ENCODE measurements at regions of chr1 and their contacts with region 1.

Region 1: DNA sequence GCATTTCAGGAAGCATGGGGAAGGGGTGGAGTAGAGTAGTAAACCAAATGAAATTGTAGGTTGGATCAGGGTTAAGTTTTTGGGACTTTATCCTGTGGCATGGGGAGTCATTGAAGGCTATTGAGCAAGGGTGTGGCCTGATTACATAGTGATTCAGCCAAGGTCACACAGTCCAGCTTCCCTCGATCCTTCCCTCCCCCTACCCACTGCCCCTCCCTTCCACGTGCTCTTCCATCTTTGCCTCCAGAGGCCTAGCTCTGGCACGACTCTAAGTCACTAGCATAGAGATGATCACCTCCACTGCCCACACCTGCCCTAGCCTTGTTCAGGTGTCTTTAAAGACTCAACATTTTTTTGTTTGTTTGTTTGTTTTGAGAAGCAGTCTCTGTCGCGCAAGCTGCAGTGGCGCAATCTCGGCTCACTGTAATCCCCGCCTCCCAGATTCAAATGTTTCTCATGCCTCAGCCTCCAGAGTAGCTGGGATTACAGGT is 37.2 kb upstream of the SLC9A1 start:
- DNase-seq: no peak
- ATAC-seq: peak in 1 of 2 donors; percentile 41

Region 2: DNA sequence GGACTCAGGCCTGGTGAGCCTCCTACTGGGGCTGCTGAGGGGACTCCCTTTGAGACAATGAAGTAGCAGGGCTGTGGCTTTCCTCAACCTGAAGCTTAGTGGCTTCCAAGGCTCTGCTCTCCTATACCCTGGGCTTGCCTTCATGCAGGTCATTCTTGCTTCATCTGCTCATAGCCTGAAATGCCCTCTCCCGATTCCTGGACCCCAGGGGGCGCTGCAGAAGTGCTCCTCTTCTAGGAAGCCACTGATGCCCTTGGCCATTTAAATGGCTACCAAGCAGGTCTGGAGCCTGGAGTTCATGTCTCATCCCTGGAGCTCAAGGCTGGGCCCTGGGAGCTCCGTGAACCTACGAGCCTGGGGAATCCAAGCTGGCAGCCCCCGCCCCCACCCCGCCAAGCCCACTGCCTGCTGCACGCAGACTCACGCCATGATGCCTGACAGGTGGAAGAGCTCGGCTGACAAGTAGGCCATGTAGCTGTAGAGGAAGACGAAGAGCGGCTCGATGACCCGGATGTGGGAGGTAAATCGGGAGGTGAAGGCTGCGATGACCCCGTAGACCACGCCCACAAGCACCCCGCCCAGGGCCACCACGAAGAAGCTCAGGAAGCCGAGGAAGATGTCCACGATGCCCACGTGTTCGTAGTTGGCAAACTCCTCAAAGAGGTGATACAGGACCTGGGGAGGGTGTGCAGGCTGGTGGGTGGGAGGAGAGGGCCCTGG is 82.8 kb before region 1 on chr1:
- intact Hi-C with region 1: loop called (anchors 5 kb)
- DNase-seq: no peak
- ATAC-seq: no peak

Region 3: DNA sequence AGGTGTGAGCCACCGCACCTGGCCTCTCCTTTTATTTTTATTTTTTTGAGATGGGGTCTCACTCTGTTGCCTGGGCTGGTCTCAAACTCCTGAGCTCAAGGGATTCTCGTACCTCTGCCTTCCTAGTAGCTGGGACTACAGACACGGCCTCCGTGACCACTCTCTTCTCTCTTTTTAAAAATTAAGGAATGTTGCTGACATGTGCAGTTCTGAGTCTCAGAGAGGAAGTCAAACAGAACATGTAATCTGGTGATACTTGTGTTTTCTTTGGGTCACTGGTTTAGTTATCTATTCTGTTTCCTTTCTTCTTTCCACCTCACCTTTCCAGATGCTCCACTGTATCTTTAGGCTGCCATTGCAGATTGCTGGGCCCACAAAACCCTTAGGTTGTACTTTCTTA is 45.0 kb after region 1 on chr1:
- intact Hi-C with region 1: no loop called
- DNase-seq: no peak
- ATAC-seq: no peak

Region 4: GRCh38 chr1:27284425-27285273 is 92.6 kb after region 1 on chr1:
- intact Hi-C with region 1: loop called in 1 of 2 experiments (anchors 5 kb)
- DNase-seq: peak; percentile 89
- ATAC-seq: peak; percentile 86 to 87